ENCODE measurements at regions of chr5 and their contacts with region 1.

Region 1: GRCh38 chr5:67003935-67004729 is 192.5 kb downstream of the CD180 start:
- DNase-seq: peak; percentile 94
- ATAC-seq: peak; percentile 78
- H3K4me3 Mint-ChIP-seq: peak overlapping the region; percentile 94
- H3K27ac Mint-ChIP-seq: peak overlapping the region; percentile 97
- H3K4me1 Mint-ChIP-seq: peaks cover 60% of the 10 kb centered on the region
- H3K27me3 Mint-ChIP-seq: no peaks in the 10 kb centered on the region

Region 2: GRCh38 chr5:66144074-66144833 is 859.9 kb before region 1 on chr5 and contains the start of gene SREK1:
- CTCF ChIA-PET with region 1: no interaction called
- POLR2A ChIA-PET with region 1: no interaction called
- intact Hi-C with region 1: loop called in 1 of 2 experiments (anchors 10 kb)
- DNase-seq: peak; percentile 95
- ATAC-seq: peak; percentile 90
- H3K4me3 Mint-ChIP-seq: peak within 1 kb of the TSS; percentile 96
- H3K27ac Mint-ChIP-seq: peak within 1 kb of the TSS; percentile 99
- H3K4me1 Mint-ChIP-seq: peaks cover 39% of the 10 kb centered on the region
- H3K27me3 Mint-ChIP-seq: no peaks in the 10 kb centered on the region
- total RNA-seq, gene SREK1: 56.1 to 61.3 TPM

Region 3: GRCh38 chr5:66828548-66829357 is 175.4 kb before region 1 on chr5:
- CTCF ChIA-PET with region 1: interaction called, 3 read pairs
- POLR2A ChIA-PET with region 1: no interaction called
- intact Hi-C with region 1: loop called in 1 of 2 experiments (anchors 2 kb)
- DNase-seq: peak; percentile 82
- ATAC-seq: peak; percentile 93
- H3K4me3 Mint-ChIP-seq: peak overlapping the region; percentile 82
- H3K27ac Mint-ChIP-seq: peak overlapping the region; percentile 83
- H3K4me1 Mint-ChIP-seq: peaks cover 25% of the 10 kb centered on the region
- H3K27me3 Mint-ChIP-seq: peaks cover 27% of the 10 kb centered on the region

Region 4: DNA sequence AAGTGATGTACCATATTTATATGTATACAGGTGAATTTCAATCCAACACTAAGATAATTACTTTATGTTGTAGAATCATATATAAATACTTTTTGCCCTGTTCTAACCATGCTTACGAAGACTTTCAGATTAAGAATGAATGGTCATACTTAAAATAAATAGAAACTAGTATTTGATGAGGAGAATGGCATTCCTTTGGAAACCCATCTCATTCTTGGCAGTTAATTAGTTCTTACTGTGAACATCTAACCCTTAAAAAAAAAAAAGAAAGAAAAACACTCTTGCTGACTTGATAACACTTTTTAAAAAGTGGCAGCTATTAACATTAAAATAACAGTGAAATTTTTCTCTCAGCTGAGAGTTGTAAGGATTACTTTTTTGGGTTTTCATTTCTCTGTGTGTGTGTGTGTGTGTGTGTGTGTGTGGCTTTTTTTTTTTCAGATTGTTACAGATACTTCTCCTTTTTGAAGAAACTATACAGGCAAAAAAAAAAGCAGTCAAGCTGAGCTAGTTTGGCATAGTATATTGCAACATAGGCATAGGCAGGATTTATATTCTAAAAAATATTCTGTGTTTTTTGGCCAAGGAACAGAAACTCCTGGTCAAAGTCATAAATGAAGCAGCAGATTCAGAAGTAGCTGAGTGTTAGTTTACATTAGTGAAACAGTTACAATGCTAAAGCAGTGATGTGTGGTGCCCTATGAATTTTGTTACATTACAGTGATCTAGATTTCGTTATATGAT is 29.0 kb after region 1 on chr5:
- CTCF ChIA-PET with region 1: interaction called, 3 read pairs
- POLR2A ChIA-PET with region 1: no interaction called
- intact Hi-C with region 1: loop called (anchors 1 kb)
- DNase-seq: no peak
- ATAC-seq: no peak
- H3K4me3 Mint-ChIP-seq: no peak overlapping the region
- H3K27ac Mint-ChIP-seq: peak overlapping the region; percentile 47
- H3K4me1 Mint-ChIP-seq: peaks cover 75% of the 10 kb centered on the region
- H3K27me3 Mint-ChIP-seq: no peaks in the 10 kb centered on the region

Region 5: GRCh38 chr5:67100301-67100700 is 96.2 kb after region 1 on chr5:
- CTCF ChIA-PET with region 1: no interaction called
- POLR2A ChIA-PET with region 1: no interaction called
- intact Hi-C with region 1: loop called in 1 of 2 experiments (anchors 1 kb)
- DNase-seq: peak; percentile 59
- ATAC-seq: peak; percentile 89
- H3K4me3 Mint-ChIP-seq: peak overlapping the region; percentile 15
- H3K27ac Mint-ChIP-seq: peak overlapping the region; percentile 66
- H3K4me1 Mint-ChIP-seq: peaks cover 12% of the 10 kb centered on the region
- H3K27me3 Mint-ChIP-seq: no peaks in the 10 kb centered on the region

Region 6: GRCh38 chr5:67165526-67166459 is 161.7 kb after region 1 on chr5:
- CTCF ChIA-PET with region 1: interaction called, 3 read pairs
- POLR2A ChIA-PET with region 1: no interaction called
- intact Hi-C with region 1: loop called (anchors 1 to 5 kb)
- DNase-seq: peak; percentile 89
- ATAC-seq: peak; percentile 76
- H3K4me3 Mint-ChIP-seq: peak overlapping the region; percentile 74
- H3K27ac Mint-ChIP-seq: peak overlapping the region; percentile 97
- H3K4me1 Mint-ChIP-seq: peaks cover 57% of the 10 kb centered on the region
- H3K27me3 Mint-ChIP-seq: no peaks in the 10 kb centered on the region

Region 7: DNA sequence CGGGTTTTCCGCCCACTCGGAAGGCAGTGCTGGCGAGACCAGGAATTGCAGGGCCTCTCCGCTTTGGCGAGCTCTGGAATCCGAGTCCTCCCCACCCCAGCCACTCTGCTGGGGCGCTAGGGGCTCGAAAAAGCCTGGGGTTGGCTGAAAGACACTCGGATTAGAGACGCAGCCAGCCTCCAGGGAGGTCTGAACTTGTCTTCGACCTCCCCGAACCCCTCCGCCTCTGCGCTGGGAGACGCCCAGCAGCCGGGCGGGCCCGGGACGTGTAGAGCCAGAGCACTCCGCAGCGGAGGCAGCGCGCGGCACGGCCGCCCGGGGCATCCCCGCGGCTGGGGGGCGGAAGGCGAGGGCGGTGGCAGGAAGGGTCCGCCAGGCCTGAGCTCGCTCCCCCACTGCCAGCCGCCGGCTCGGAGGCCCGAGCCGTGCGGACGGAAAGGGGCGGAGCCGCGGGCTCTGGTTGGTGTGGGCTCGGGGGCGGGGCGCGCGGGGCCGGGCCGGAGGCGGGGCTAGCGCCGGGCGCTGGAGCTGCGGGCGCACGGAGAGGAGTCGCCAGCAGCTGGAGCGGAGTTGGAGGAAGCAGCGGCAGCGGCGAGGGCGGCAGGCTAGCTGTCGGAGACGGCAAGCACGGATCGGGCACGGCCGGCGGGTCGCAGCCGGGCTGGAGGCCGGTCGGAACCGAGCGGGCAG is 1211.2 kb after region 1 on chr5 and contains the start of gene PIK3R1:
- CTCF ChIA-PET with region 1: no interaction called
- POLR2A ChIA-PET with region 1: no interaction called
- intact Hi-C with region 1: loop called in 1 of 2 experiments (anchors 10 kb)
- DNase-seq: peak; percentile 96
- ATAC-seq: peak; percentile 85
- H3K4me3 Mint-ChIP-seq: peak within 1 kb of the TSS; percentile 83
- H3K27ac Mint-ChIP-seq: peak within 1 kb of the TSS; percentile 97
- H3K4me1 Mint-ChIP-seq: peaks cover 45% of the 10 kb centered on the region
- H3K27me3 Mint-ChIP-seq: no peaks in the 10 kb centered on the region
- total RNA-seq, gene PIK3R1: 40.0 to 49.0 TPM

Measured in activated CD4-positive, alpha-beta T cell treated with anti-CD3 and anti-CD28 coated beads for 36 hours (primary cell).